ENCODE measurements at regions of chr11 and their contacts with region 1.

Region 1: GRCh38 chr11:68271781-68272608 is at the start of gene C11orf24:
- DNase-seq: peak; percentile 92 to 94
- ATAC-seq: peak; percentile 92 to 94
- H3K4me3 ChIP-seq: peak within 1 kb of the TSS; percentile 66 to 89 (median 75)
- H3K27ac ChIP-seq: peak within 1 kb of the TSS; percentile 88 to 97 (median 92)
- H3K4me1 ChIP-seq: peaks cover 21 to 31% of the 10 kb centered on the region in 2 donors
- H3K27me3 ChIP-seq: no peaks in the 10 kb centered on the region
- CTCF ChIP-seq: peak in 1 of 5 experiments; percentile 7
- POLR2A ChIP-seq: peak; percentile 77 to 80
- total RNA-seq, gene C11orf24: 8.1 to 19.3 (median 10.6) TPM

Region 2: DNA sequence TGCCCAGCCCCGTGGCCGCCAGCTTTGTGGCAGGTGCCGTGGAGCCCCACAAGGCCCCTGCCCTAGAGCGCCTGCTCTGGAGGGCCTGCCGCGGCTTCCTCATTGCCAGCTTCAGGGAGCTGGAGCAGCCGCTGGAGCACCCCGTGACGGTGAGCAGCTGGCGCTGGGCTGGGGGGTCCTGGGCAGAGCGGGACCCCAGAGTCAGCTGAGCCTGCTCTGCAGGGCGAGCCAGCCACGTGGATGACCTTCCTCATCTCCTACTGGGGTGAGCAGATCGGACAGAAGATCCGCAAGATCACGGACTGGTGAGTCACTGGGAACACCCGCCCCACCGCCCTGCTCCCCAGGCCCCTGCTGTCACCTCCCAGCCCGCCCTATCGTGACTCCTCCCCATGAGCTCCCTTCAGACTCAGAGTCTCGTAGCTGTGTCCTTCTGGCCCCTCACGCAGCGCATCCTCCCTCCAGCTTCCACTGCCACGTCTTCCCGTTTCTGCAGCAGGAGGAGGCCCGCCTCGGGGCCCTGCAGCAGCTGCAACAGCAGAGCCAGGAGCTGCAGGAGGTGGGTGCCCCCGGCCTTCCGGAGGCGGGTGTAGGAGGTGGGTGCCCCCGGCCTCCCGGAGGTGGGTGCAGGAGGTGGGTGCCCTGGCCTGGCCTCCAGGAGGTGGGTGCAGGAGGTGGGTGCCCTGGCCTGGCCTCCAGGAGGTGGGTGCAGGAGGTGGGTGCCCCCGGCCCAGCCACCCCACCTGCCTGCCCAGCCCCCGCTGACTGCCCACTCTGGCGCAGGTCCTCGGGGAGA is 228.4 kb before region 1 on chr11:
- in situ Hi-C with region 1: no loop called
- intact Hi-C with region 1: no loop called
- DNase-seq: no peak
- ATAC-seq: no peak
- H3K4me3 ChIP-seq: no peak overlapping the region
- H3K27ac ChIP-seq: no peak overlapping the region
- H3K4me1 ChIP-seq: peaks cover 0 to 11% of the 10 kb centered on the region in 2 donors
- H3K27me3 ChIP-seq: no peaks in the 10 kb centered on the region
- CTCF ChIP-seq: no peak
- POLR2A ChIP-seq: no peak

Region 3: DNA sequence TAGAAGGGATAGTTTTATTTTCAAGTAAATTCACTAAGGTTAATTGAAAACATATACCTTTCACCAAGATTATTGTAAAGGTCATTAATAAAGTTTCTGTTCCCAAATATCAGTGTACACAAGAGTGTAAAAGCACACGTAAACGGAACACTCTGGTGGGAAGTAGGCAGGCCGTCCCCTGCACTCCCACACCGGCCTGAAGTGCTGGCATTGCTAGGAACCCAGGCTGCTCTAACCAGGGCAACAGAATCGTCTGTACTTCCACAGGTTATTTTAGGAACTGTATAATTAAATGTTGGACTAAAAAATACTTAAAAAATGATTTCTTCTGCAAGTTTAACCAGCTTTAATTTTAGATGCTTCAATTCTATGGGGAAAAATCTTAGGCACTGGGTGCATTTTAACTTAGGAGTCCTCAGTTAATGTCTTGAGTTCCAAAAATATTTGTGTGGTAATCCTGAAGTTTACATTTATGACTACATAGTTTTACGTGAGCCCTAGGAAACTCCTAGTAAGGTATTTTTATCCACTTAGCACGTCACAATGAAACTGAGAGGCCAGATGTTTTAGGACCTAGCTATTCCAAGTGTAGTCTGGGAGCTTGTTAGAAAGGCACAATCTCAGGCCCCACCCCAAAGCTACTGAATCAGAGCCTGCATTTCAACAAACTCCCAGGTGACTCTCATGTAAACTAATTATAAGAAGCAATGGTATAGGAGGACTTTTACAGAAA is 90.1 kb before region 1 on chr11:
- in situ Hi-C with region 1: no loop called
- intact Hi-C with region 1: no loop called
- DNase-seq: no peak
- ATAC-seq: no peak
- H3K4me3 ChIP-seq: no peak overlapping the region
- H3K27ac ChIP-seq: no peak overlapping the region
- H3K4me1 ChIP-seq: no peaks in the 10 kb centered on the region
- H3K27me3 ChIP-seq: no peaks in the 10 kb centered on the region
- CTCF ChIP-seq: no peak
- POLR2A ChIP-seq: no peak

Region 4: DNA sequence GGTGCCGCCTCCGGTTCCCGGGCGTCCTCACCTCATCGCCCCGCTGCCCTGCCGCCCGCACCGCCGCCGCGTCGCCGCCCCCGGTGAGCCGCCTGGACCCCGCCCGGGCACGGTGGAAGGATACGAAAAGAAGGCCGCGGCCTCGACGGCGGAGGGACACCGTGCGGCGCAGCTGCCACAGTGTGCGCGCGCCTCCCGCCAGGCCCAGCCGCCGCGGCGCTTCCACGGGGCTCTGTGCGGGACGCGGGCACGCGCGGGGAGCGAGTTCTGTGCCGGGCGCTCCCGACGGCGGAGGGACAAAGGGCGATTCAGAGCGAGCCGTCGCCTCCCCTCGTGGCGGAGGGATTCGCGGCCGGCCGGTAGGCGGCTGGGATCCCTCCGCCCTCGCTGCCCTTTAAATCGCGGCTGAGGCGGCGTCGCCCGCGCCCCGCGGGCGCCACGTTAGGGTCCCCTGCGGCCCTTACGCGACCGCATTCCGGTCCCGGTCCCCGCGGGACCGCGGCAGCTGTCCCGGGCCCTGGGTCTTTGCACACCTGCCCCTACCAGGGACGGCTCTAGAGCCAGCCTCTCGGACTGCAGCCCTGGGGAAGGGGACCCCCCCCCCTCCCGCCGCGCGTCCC is 58.3 kb before region 1 on chr11:
- in situ Hi-C with region 1: no loop called
- intact Hi-C with region 1: loop called (anchors 2 kb)
- DNase-seq: peak; percentile 81 to 87
- ATAC-seq: peak; percentile 33 to 37
- H3K4me3 ChIP-seq: peak overlapping the region; percentile 69 to 99 (median 91)
- H3K27ac ChIP-seq: peak overlapping the region; percentile 89 to 100 (median 96)
- H3K4me1 ChIP-seq: peaks cover 41 to 42% of the 10 kb centered on the region in 2 donors
- H3K27me3 ChIP-seq: no peaks in the 10 kb centered on the region
- CTCF ChIP-seq: peak in 4 of 5 experiments; percentile 12 to 68 (median 38)
- POLR2A ChIP-seq: peak; percentile 79 to 90

Measured in gastrocnemius medialis (tissue), 4 donors.